PC-9 (cell line): ENCODE measurements at regions of chr16 and their contacts with region 1.

Region 1: GRCh38 chr16:8173111-8173644 is 417.1 kb downstream of the TMEM114 start:
- DNase-seq: peak; percentile 62 to 64
- H3K4me3 ChIP-seq: no peak overlapping the region
- H3K27ac ChIP-seq: no peak overlapping the region
- H3K4me1 ChIP-seq: no peaks in the 10 kb centered on the region
- H3K27me3 ChIP-seq: peaks cover 22% of the 10 kb centered on the region
- CTCF ChIP-seq: peak; percentile 83

Region 2: DNA sequence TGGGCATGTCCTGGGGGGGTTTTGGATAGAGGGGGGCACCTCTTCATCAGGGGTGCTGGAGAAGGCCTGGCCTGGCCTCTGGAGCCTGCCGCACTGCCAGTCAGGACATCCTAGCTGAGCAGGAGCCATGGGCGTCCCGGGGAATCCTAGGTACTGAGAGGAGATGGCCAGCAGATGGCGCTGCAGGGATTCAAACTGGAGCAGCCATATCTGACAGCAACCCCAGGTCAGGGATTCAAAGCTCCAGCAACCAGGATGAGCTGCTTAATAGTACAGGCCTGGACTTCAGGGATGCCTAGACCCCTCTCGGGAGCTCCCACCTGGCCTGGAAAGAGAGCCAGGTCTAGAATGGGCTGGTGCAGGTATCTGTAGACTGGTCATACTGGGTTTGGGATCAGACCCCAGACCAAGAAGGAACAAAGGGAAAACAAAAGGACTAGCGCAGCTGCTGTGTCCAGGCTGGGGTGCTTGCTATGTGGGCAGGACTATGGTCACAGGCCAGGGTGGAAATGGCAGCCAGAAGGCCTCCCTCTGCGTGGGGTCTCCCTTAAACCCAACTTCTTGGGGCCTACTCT is 1147.5 kb before region 1 on chr16:
- CTCF ChIA-PET with region 1: interaction called, 3 read pairs
- POLR2A ChIA-PET with region 1: no interaction called
- intact Hi-C with region 1: loop called (anchors 5 kb)
- DNase-seq: peak; percentile 36 to 57
- H3K4me3 ChIP-seq: no peak overlapping the region
- H3K27ac ChIP-seq: no peak overlapping the region
- H3K4me1 ChIP-seq: no peaks in the 10 kb centered on the region
- H3K27me3 ChIP-seq: no peaks in the 10 kb centered on the region
- CTCF ChIP-seq: peak; percentile 83

Region 3: GRCh38 chr16:7268182-7268581 is 905.0 kb before region 1 on chr16:
- CTCF ChIA-PET with region 1: no interaction called
- POLR2A ChIA-PET with region 1: no interaction called
- intact Hi-C with region 1: loop called (anchors 5 kb)
- DNase-seq: peak in 1 of 2 experiments; percentile 17
- H3K4me3 ChIP-seq: no peak overlapping the region
- H3K27ac ChIP-seq: no peak overlapping the region
- H3K4me1 ChIP-seq: no peaks in the 10 kb centered on the region
- H3K27me3 ChIP-seq: no peaks in the 10 kb centered on the region; the same call in 1 of the 2 replicates
- CTCF ChIP-seq: peak; percentile 71

Region 4: GRCh38 chr16:7861891-7862582 is 311.1 kb before region 1 on chr16:
- CTCF ChIA-PET with region 1: no interaction called
- POLR2A ChIA-PET with region 1: no interaction called
- intact Hi-C with region 1: no loop called
- DNase-seq: no peak
- H3K4me3 ChIP-seq: no peak overlapping the region
- H3K27ac ChIP-seq: no peak overlapping the region
- H3K4me1 ChIP-seq: no peaks in the 10 kb centered on the region
- H3K27me3 ChIP-seq: no peaks in the 10 kb centered on the region
- CTCF ChIP-seq: no peak

Region 5: GRCh38 chr16:8087597-8088289 is 85.4 kb before region 1 on chr16:
- CTCF ChIA-PET with region 1: no interaction called
- POLR2A ChIA-PET with region 1: no interaction called
- intact Hi-C with region 1: no loop called
- DNase-seq: no peak
- H3K4me3 ChIP-seq: no peak overlapping the region
- H3K27ac ChIP-seq: no peak overlapping the region
- H3K4me1 ChIP-seq: no peaks in the 10 kb centered on the region
- H3K27me3 ChIP-seq: no peaks in the 10 kb centered on the region
- CTCF ChIP-seq: no peak

Region 6: DNA sequence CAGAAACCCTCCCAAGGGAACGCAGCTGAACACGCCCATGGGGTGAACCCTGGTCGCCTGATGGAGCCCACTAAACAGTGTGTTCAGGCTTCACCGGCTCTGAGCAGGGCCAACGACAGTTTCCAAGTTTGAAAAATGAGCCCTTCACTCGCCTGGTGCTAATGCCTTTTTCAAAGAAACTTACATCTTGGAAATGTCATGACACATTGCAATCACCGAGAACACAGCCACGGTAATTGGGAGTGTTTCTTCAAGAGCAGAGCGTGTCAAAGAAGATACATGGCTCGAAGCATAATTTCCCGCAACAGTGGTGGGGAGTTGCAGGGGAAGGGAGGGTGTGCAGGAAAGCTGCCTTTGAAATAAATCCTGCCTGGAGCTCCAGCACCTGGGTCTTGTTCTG is 46.1 kb before region 1 on chr16:
- CTCF ChIA-PET with region 1: no interaction called
- POLR2A ChIA-PET with region 1: no interaction called
- intact Hi-C with region 1: no loop called
- DNase-seq: no peak
- H3K4me3 ChIP-seq: no peak overlapping the region
- H3K27ac ChIP-seq: no peak overlapping the region
- H3K4me1 ChIP-seq: no peaks in the 10 kb centered on the region
- H3K27me3 ChIP-seq: no peaks in the 10 kb centered on the region
- CTCF ChIP-seq: no peak

Region 7: DNA sequence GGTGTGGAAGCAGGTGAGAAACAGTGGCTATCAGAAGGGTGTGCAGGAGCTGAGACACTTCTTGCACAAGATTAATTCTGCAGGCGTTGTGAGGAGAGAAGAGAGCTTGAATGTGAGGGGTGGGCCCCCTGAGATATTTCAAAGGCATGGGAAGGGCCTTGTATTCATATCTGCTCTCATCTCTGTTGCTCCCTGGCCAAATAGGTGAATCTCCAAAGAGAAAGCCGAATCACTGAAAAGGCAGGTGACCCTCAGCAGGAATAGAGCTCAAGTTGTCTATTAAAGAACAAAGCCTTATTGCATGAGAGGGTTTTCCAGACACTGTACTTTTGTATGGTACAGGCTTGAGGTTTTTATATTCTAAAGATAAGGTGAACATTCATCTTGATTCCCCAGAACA is 44.0 kb after region 1 on chr16:
- CTCF ChIA-PET with region 1: no interaction called
- POLR2A ChIA-PET with region 1: no interaction called
- intact Hi-C with region 1: no loop called
- DNase-seq: no peak
- H3K4me3 ChIP-seq: no peak overlapping the region
- H3K27ac ChIP-seq: no peak overlapping the region
- H3K4me1 ChIP-seq: no peaks in the 10 kb centered on the region
- H3K27me3 ChIP-seq: peaks cover 26% of the 10 kb centered on the region; the same call in 1 of the 2 replicates
- CTCF ChIP-seq: no peak